ENCODE measurements at regions of chr17 and their contacts with region 1.

Region 1: GRCh38 chr17:57747221-57748017 is 2.3 kb upstream of the CCDC182 start:
- H3K4me3 ChIP-seq: no peak overlapping the region
- H3K27ac ChIP-seq: no peak overlapping the region
- H3K4me1 ChIP-seq: no peaks in the 10 kb centered on the region
- CTCF ChIP-seq: peak; percentile 55; the same call in 1 of the 2 replicates

Region 2: GRCh38 chr17:57121338-57122042 is 625.9 kb before region 1 on chr17:
- CTCF ChIA-PET with region 1: interaction called, 11 read pairs
- POLR2A ChIA-PET with region 1: interaction called, 3 read pairs
- H3K4me3 ChIP-seq: no peak overlapping the region
- H3K27ac ChIP-seq: no peak overlapping the region
- H3K4me1 ChIP-seq: no peaks in the 10 kb centered on the region
- CTCF ChIP-seq: peak; percentile 34; the same call in 1 of the 2 replicates

Region 3: GRCh38 chr17:57130761-57131461 is 616.5 kb before region 1 on chr17:
- CTCF ChIA-PET with region 1: interaction called, 26 read pairs
- POLR2A ChIA-PET with region 1: no interaction called
- H3K4me3 ChIP-seq: peak overlapping the region; percentile 33
- H3K27ac ChIP-seq: no peak overlapping the region
- H3K4me1 ChIP-seq: no peaks in the 10 kb centered on the region; the same call in 1 of the 2 replicates
- CTCF ChIP-seq: peak; percentile 67

Region 4: GRCh38 chr17:57766318-57766943 is 19.0 kb after region 1 on chr17:
- CTCF ChIA-PET with region 1: interaction called, 18 read pairs
- POLR2A ChIA-PET with region 1: no interaction called
- H3K4me3 ChIP-seq: no peak overlapping the region
- H3K27ac ChIP-seq: no peak overlapping the region
- H3K4me1 ChIP-seq: no peaks in the 10 kb centered on the region
- CTCF ChIP-seq: no peak

Region 5: DNA sequence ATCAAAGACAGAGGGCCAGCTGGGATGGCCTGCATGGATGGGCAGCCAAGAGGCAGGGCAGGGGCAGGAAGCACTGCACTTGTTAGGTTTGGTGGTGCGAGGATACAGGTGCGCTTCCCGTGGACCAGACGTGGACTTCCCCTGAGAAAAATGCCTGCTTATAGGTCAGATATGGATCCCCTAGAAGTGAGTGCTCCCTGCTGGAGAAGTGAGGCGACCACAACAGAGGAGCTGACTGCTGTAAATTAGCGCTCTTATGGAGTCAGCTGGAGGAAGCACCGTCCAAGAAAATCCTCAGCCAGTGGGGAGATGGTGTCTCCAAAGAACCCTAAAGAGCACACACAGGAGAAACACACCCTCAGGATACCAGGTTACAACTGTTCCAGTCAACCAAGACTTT is 25.4 kb after region 1 on chr17:
- CTCF ChIA-PET with region 1: interaction called, 10 read pairs
- POLR2A ChIA-PET with region 1: no interaction called
- H3K4me3 ChIP-seq: no peak overlapping the region
- H3K27ac ChIP-seq: no peak overlapping the region
- H3K4me1 ChIP-seq: no peaks in the 10 kb centered on the region
- CTCF ChIP-seq: no peak

Region 6: GRCh38 chr17:57842280-57842679 is 94.9 kb after region 1 on chr17:
- CTCF ChIA-PET with region 1: no interaction called
- POLR2A ChIA-PET with region 1: no interaction called
- H3K4me3 ChIP-seq: no peak overlapping the region
- H3K27ac ChIP-seq: no peak overlapping the region
- H3K4me1 ChIP-seq: no peaks in the 10 kb centered on the region
- CTCF ChIP-seq: no peak

Measured in HEK293 (cell line).